HCT116 (cell line): ENCODE measurements at regions of chr7 and their contacts with region 1.

Region 1: DNA sequence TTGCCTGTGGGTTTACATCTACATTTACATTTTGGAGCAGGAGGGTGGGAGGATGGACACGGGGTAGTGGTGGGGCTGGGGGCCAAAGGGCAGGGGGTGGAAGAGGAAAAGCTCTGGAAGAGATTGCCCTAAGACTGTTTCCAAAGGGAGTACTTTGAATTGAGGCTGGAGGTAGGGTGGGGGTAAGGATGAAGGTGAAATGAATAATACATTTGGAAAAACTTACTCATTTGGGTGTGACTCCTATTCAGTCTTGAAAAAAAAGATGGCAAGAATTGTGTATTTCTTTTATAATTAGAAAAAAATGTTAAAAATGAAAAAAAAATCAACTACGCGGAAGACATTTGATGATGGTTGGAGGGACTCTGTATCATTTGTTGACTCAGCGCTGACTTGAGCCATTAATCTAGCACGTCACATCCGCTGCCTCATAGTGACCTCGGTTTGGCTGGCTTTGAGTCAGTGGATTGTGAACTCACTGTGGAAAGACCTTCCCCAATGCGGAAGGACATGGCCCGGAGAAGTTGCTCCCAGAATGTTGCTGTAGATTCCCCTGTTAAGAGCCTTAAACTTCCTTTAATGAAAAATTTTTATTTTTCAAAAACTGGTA is 2.8 kb downstream of the FAM180A start:
- DNase-seq: peak; percentile 93
- ATAC-seq: peak; percentile 74
- H3K4me3 ChIP-seq: peak overlapping the region; percentile 30 to 45
- H3K27ac ChIP-seq: peak overlapping the region; percentile 62
- H3K4me1 ChIP-seq: peaks cover 25 to 49% of the 10 kb centered on the region in 2 experiments
- H3K27me3 ChIP-seq: no peaks in the 10 kb centered on the region
- CTCF ChIP-seq: no peak
- POLR2A ChIP-seq: no peak
- RAD21 ChIP-seq: no peak

Region 2: GRCh38 chr7:135714534-135715009 is 31.2 kb before region 1 on chr7:
- CTCF ChIA-PET with region 1: interaction called, 3 read pairs
- POLR2A ChIA-PET with region 1: interaction called, 4 read pairs
- RAD21 ChIA-PET with region 1: no interaction called
- intact Hi-C with region 1: loop called (anchors 1 kb)
- DNase-seq: peak; percentile 67
- ATAC-seq: peak; percentile 91
- H3K4me3 ChIP-seq: peak overlapping the region in 1 of 2 experiments; percentile 21; a peak in 3 of 4 replicates
- H3K27ac ChIP-seq: peak overlapping the region; percentile 16; the same call in 1 of the 2 replicates
- H3K4me1 ChIP-seq: peaks cover 29 to 45% of the 10 kb centered on the region in 2 experiments
- H3K27me3 ChIP-seq: no peaks in the 10 kb centered on the region
- CTCF ChIP-seq: no peak
- POLR2A ChIP-seq: no peak
- RAD21 ChIP-seq: no peak